Ovary (tissue), 10 donors: ENCODE measurements at regions of chr17 and their contacts with region 1.

Region 1: DNA sequence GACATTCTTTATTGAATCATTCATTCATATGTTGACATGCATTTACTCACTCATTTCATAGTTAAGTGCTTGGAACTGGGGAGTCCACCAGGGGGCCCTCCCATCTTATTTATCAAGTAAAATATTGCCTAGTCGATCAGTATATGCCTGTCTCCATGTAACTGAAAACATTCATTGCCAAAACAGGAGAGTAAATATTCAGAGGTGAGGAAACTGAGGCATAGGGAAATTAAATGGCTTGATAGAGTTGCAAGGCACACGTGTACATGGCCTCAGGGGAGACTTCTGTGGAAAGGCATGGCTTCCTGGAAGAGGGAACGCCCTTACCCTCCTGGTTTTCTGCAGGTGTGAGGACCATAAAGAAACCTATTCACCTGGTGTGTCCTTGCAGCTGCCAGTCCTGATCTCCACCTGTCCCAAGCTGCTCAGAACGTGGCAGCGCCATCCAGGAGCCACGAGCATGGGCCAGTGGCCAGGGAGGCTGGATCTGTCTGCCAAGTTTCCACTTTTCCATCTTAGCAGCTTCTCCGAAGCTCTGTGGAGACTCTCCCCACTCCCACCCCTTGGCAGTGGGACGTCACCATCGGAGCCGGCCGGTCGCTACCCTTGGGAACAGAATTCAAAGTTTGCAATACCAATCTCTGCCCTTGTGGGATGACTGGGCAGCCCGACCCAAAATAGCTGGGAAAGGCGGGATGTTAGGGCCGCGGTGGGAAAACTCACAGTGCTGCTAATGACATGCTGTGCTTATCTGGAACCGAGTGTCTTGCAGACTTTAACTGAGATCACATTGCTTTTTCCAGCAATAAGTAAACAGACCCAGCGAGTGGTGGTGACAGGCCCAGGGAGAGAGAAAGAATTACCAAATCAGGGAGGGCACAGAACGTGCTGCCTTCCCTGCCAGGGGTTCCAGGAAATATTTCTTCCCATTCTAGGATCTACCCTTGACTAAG is 4.1 kb upstream of the C1QTNF1 start:
- DNase-seq: peak; percentile 62 to 80 (median 72)
- H3K4me3 ChIP-seq: no peak overlapping the region
- H3K27ac ChIP-seq: peak overlapping the region in 1 of 2 donors; percentile 28
- H3K4me1 ChIP-seq: peaks cover 7% of the 10 kb centered on the region
- H3K27me3 ChIP-seq: no peaks in the 10 kb centered on the region
- CTCF ChIP-seq: peak; percentile 18 to 82 (median 80)
- EP300 ChIP-seq: peak; percentile 68
- POLR2A ChIP-seq: no peak

Region 2: GRCh38 chr17:79045842-79046196 is 25.9 kb after region 1 on chr17:
- intact Hi-C with region 1: loop called in 1 of 4 experiments (anchors 2 kb)
- DNase-seq: peak; percentile 45 to 82 (median 68)
- H3K4me3 ChIP-seq: no peak overlapping the region
- H3K27ac ChIP-seq: no peak overlapping the region
- H3K4me1 ChIP-seq: peaks cover 2% of the 10 kb centered on the region
- H3K27me3 ChIP-seq: no peaks in the 10 kb centered on the region
- CTCF ChIP-seq: peak; percentile 72 to 82 (median 80)
- EP300 ChIP-seq: no peak
- POLR2A ChIP-seq: no peak